Activated CD4-positive, alpha-beta memory T cell treated with anti-CD3 and anti-CD28 coated beads for 36 hours (primary cell): ENCODE measurements at regions of chr6 and their contacts with region 1.

Region 1: DNA sequence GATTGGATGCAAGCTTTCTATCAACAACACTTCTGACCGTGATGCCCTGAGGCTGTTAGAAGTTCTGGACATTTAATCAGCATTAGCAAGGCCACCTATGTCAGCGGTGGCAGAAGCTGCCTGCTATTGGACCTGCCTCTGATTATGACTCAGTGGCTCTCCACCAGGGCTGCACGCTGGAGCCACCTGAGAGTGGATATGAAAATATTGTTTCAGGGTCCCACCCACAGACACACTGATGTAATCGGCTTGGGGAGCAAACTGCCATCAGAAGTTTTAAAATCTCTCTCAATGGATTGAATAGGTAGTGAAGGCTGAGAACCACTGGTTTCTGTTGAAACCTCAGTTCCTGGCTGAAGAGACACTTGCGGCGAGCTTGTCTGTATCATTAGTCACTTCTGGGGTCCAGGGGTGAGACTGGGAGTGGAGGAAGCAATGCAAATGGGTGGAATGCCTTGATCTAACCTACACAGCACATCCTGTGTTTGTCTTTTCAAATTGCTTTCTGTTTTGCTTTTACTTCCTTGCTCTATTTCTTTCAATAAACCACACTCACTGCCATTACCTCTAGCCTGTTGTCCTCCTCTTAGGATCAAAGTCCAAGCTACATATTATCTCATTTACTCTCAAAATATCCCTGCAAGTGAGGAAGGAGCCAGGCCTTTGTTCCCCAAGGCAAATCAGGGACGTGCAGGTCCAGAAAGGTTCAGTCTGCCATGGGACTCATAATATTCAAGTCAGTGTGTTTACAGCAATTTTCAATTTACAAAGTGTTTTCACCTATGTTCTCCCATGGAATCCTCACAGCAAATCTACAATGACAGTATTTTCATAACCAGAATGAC is 4.2 kb downstream of the CLIC5 start:
- DNase-seq: peak; percentile 80
- H3K4me3 Mint-ChIP-seq: peak overlapping the region; percentile 39
- H3K27ac Mint-ChIP-seq: peak overlapping the region; percentile 77
- H3K4me1 Mint-ChIP-seq: peaks cover 58% of the 10 kb centered on the region
- H3K27me3 Mint-ChIP-seq: peaks cover 1% of the 10 kb centered on the region

Region 2: GRCh38 chr6:44932651-44933091 is 1078.8 kb before region 1 on chr6:
- CTCF ChIA-PET with region 1: no interaction called
- POLR2A ChIA-PET with region 1: interaction called, 4 read pairs
- intact Hi-C with region 1: loop called (anchors 10 kb)
- DNase-seq: peak; percentile 43
- H3K4me3 Mint-ChIP-seq: peak overlapping the region; percentile 80
- H3K27ac Mint-ChIP-seq: peak overlapping the region; percentile 88
- H3K4me1 Mint-ChIP-seq: peaks cover 41% of the 10 kb centered on the region
- H3K27me3 Mint-ChIP-seq: no peaks in the 10 kb centered on the region

Region 3: GRCh38 chr6:45421709-45422502 is 589.6 kb before region 1 on chr6:
- CTCF ChIA-PET with region 1: no interaction called
- POLR2A ChIA-PET with region 1: no interaction called
- intact Hi-C with region 1: loop called (anchors 5 kb)
- DNase-seq: peak; percentile 78
- H3K4me3 Mint-ChIP-seq: peak overlapping the region; percentile 91
- H3K27ac Mint-ChIP-seq: peak overlapping the region; percentile 97
- H3K4me1 Mint-ChIP-seq: peaks cover 41% of the 10 kb centered on the region
- H3K27me3 Mint-ChIP-seq: no peaks in the 10 kb centered on the region

Region 4: DNA sequence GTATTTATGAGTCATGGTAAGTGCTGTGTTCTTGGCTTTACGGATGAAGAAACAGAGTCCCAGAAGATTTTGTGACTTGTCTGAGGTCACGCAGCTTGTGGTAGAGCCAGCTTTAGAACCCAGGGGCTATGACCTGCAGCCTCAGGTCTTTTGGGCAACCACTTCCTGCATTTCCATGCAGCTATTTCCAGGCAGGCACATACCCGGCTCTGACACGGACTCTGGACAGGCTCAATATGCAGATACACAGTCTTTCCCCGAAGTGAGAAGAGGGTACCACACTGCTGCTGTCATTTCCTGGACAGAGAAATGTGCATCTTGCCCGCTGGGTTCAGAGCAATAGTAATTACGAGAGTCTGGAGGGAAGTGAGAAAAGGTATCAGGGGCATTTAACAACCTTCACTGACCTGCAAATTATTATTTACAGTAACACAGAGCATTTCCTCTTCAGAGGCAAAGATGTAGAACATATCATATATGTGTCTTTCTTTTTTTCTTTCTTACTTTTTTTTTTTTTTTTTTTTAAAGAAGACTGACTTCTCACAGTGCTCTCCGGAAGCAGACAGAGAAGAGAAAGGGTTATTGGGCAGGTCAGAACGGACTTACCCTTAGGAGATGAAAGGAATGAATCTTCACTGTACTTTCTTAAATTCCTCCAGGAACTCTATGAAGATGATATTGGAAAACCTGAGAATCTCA is 180.9 kb before region 1 on chr6:
- CTCF ChIA-PET with region 1: no interaction called
- POLR2A ChIA-PET with region 1: no interaction called
- intact Hi-C with region 1: loop called (anchors 5 kb)
- DNase-seq: peak; percentile 88
- H3K4me3 Mint-ChIP-seq: peak overlapping the region; percentile 75
- H3K27ac Mint-ChIP-seq: peak overlapping the region; percentile 95
- H3K4me1 Mint-ChIP-seq: peaks cover 59% of the 10 kb centered on the region
- H3K27me3 Mint-ChIP-seq: peaks cover 2% of the 10 kb centered on the region

Region 5: DNA sequence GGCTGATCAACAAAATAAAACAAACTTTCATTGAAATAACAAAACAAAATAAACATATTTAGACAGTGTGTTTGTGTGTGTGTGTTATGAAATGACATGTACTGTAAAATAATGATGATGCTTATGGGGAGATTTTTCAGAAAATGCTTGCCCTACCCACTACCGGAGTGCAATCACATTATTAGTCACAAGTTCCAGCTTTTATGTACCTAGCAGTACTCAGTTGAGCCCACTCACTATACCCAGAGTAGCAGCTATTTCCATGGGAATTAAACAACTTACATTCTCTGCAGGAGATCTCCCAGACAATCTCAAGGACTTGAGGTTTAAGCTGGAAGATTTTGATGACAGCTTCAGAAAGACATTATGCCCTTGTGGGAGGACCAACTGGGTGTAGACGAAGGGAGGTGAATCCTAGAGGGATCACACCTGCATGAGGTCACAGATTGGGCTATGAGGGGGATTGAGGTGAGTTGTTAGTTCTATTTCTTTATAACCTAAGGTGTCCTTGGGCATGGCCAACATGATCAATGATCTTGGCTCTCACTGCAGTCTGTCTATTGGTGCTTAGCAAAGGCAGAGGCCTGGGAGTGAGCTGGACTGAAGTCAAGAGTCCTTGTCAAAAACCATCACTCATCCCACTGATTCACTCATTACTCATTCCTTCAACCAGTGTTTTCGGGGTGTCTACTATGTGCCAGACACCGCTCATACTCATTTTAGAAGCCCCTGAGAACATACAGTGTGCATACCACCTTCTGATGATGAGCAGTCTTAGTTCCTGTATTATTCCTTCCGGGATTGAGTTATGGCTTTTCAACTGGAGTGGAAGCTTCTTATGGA is 10.9 kb after region 1 on chr6:
- CTCF ChIA-PET with region 1: interaction called, 4 read pairs
- POLR2A ChIA-PET with region 1: interaction called, 6 read pairs
- intact Hi-C with region 1: loop called (anchors 1 kb)
- DNase-seq: peak; percentile 30
- H3K4me3 Mint-ChIP-seq: no peak overlapping the region
- H3K27ac Mint-ChIP-seq: peak overlapping the region; percentile 21
- H3K4me1 Mint-ChIP-seq: peaks cover 16% of the 10 kb centered on the region
- H3K27me3 Mint-ChIP-seq: peaks cover 8% of the 10 kb centered on the region

Region 6: GRCh38 chr6:46652603-46653438 is 641.4 kb after region 1 on chr6 and contains the starts of genes CYP39A1 and SLC25A27:
- CTCF ChIA-PET with region 1: no interaction called
- POLR2A ChIA-PET with region 1: no interaction called
- intact Hi-C with region 1: no loop called
- DNase-seq: peak; percentile 89
- H3K4me3 Mint-ChIP-seq: peak within 1 kb of the TSS; percentile 76
- H3K27ac Mint-ChIP-seq: no peak within 1 kb of the TSS
- H3K4me1 Mint-ChIP-seq: peaks cover 13% of the 10 kb centered on the region
- H3K27me3 Mint-ChIP-seq: peaks cover 44% of the 10 kb centered on the region
- total RNA-seq, gene CYP39A1: not detected
- total RNA-seq, gene SLC25A27: 0.53 to 0.78 TPM